IMR-90 (cell line): ENCODE measurements at regions of chr1 and their contacts with region 1.

Region 1: DNA sequence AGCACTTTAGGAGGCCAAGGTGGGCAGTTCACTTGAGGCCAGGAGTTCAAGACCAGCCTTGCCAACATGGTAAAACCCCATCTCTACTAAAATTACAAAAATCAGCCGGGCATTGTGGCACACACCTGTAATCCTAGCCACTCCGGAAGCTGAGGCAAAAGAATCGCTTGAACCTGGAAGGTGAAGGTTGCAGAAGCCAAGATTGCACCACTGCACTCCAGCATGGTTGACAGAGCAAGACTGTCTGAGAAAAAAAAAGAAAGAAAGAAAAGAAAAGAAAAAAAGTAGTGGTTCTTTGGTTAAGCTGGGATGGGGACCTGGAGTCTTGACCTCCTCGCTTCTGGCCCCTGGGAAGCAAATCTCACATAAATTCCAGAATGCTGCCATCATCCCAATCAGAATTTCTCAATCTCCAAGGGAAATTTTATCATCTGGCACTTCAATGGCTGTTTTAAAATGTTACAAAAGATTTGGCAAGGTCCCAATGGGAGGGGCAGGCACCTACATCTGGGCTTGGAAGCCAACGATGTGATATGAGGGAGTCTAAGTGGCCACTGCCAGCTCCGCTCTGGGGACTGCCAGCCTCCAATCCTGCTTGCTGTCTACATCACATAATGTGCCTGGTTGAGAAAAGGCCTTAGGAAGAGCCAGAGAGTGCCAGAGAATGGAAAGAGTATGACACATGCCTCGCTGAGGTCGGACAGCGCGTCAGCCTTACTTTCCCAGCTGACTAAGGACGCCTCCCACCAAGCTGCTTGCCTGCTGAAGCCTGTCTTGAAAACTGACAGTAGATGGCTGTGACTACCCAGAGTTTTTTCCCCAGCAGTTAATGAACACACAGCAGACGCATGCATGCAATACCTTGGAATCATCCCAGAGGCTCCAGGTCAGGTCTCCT is 42.1 kb upstream of the SRP9 start:
- DNase-seq: peak; percentile 98
- ATAC-seq: peak; percentile 95
- H3K4me3 ChIP-seq: no peak overlapping the region
- H3K27ac ChIP-seq: peak overlapping the region; percentile 79
- H3K4me1 ChIP-seq: peaks cover 13% of the 10 kb centered on the region
- H3K27me3 ChIP-seq: no peaks in the 10 kb centered on the region
- CTCF ChIP-seq: peak; percentile 34
- POLR2A ChIP-seq: peak; percentile 64
- RAD21 ChIP-seq: peak; percentile 40

Region 2: GRCh38 chr1:225694151-225694603 is 41.3 kb before region 1 on chr1:
- CTCF ChIA-PET with region 1: no interaction called
- POLR2A ChIA-PET with region 1: no interaction called
- dilution Hi-C with region 1: no loop called
- in situ Hi-C with region 1: loop called (anchors 5 kb)
- intact Hi-C with region 1: no loop called
- DNase-seq: peak; percentile 56
- ATAC-seq: 0 out of 2 replicates have a peak, but pooled peaks have one; percentile 14
- H3K4me3 ChIP-seq: no peak overlapping the region
- H3K27ac ChIP-seq: no peak overlapping the region
- H3K4me1 ChIP-seq: peaks cover 13% of the 10 kb centered on the region
- H3K27me3 ChIP-seq: no peaks in the 10 kb centered on the region; the same call in 1 of the 2 replicates
- CTCF ChIP-seq: no peak
- POLR2A ChIP-seq: no peak
- RAD21 ChIP-seq: no peak